ENCODE measurements at regions of chr13 and their contacts with region 1.

Region 1: GRCh38 chr13:108915634-108916512 is 286.5 kb downstream of the MYO16 start:
- DNase-seq: peak; percentile 70
- H3K4me3 Mint-ChIP-seq: peak overlapping the region; percentile 50
- H3K27ac Mint-ChIP-seq: peak overlapping the region; percentile 100
- H3K4me1 Mint-ChIP-seq: peaks cover 42% of the 10 kb centered on the region
- H3K27me3 Mint-ChIP-seq: no peaks in the 10 kb centered on the region
- CTCF ChIP-seq: no peak

Region 2: GRCh38 chr13:108755083-108755482 is 160.8 kb before region 1 on chr13:
- CTCF ChIA-PET with region 1: no interaction called
- intact Hi-C with region 1: no loop called
- DNase-seq: no peak
- H3K4me3 Mint-ChIP-seq: no peak overlapping the region
- H3K27ac Mint-ChIP-seq: no peak overlapping the region
- H3K4me1 Mint-ChIP-seq: no peaks in the 10 kb centered on the region
- H3K27me3 Mint-ChIP-seq: no peaks in the 10 kb centered on the region
- CTCF ChIP-seq: no peak

Region 3: DNA sequence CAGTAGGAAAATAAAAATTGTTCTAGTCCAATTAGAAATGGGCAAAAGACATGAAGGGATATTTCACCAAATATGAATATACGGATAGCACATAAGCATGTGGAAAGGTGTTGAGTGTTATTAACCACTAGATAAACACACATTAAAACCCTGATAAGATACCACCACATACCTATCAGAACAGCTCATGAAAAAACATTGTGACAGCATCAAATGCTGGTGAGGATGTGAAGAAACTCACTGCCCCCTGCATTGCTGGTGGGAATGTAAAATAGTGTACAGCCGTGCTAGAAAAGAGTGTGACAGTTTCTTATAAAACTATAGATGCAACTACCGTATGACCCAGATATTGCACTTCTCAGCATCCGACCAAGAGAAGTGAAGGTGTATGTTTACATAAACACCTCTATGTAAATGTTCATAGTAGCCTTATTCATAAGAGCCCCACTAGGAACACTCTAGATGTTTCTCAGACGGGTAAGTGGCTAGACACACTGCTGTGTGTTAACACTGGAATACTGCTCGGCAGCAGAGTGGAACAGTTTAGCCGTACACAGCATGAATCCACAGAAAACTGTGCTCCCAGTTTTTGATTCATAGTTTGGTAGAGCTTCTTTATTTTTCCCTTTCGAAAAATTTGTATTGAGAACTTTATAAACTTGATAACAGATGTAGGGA is 34.6 kb after region 1 on chr13:
- CTCF ChIA-PET with region 1: interaction called, 3 read pairs
- intact Hi-C with region 1: loop called (anchors 5 kb)
- DNase-seq: no peak
- H3K4me3 Mint-ChIP-seq: no peak overlapping the region
- H3K27ac Mint-ChIP-seq: no peak overlapping the region
- H3K4me1 Mint-ChIP-seq: peaks cover 7% of the 10 kb centered on the region
- H3K27me3 Mint-ChIP-seq: no peaks in the 10 kb centered on the region
- CTCF ChIP-seq: no peak

Region 4: DNA sequence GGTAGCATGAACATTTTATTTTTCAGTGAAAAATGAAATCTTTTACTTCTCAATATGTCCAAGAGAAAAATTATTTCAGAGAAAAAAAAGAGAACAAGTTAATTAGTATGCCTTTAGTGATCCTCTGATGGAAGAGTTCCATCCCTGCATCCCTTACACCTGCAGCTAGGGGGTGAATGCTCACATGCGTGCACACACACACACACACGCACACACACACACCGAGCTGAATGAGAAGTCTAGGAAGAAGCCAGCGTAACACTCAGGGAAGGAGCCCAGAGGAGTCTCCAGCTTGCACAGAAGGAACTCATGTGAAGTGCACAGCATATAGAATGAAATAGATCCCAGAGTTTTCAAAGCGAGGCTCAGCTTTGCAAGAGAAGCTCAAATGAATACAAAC is 360.0 kb after region 1 on chr13:
- CTCF ChIA-PET with region 1: no interaction called
- intact Hi-C with region 1: no loop called
- DNase-seq: peak; percentile 13
- H3K4me3 Mint-ChIP-seq: no peak overlapping the region
- H3K27ac Mint-ChIP-seq: no peak overlapping the region
- H3K4me1 Mint-ChIP-seq: no peaks in the 10 kb centered on the region
- H3K27me3 Mint-ChIP-seq: no peaks in the 10 kb centered on the region
- CTCF ChIP-seq: no peak